ENCODE measurements at regions of chr2 and their contacts with region 1.

Region 1: GRCh38 chr2:133561045-133561852 is 7.0 kb downstream of the NCKAP5 start:
- DNase-seq: peak; percentile 90
- ATAC-seq: peak; percentile 91
- H3K4me3 ChIP-seq: no peak overlapping the region
- H3K27ac ChIP-seq: no peak overlapping the region; the same call in 1 of the 2 replicates
- H3K4me1 ChIP-seq: peaks cover 15% of the 10 kb centered on the region
- H3K27me3 ChIP-seq: no peaks in the 10 kb centered on the region
- CTCF ChIP-seq: peak; percentile 81
- POLR2A ChIP-seq: no peak
- RAD21 ChIP-seq: peak; percentile 89

Region 2: GRCh38 chr2:132651115-132652045 is 909.9 kb before region 1 on chr2:
- CTCF ChIA-PET with region 1: no interaction called
- POLR2A ChIA-PET with region 1: no interaction called
- dilution Hi-C with region 1: no loop called
- in situ Hi-C with region 1: loop called (anchors 25 kb)
- intact Hi-C with region 1: no loop called
- DNase-seq: peak; percentile 71
- ATAC-seq: peak; percentile 91
- H3K4me3 ChIP-seq: no peak overlapping the region
- H3K27ac ChIP-seq: peak overlapping the region; percentile 4
- H3K4me1 ChIP-seq: peaks cover 13% of the 10 kb centered on the region
- H3K27me3 ChIP-seq: no peaks in the 10 kb centered on the region
- CTCF ChIP-seq: peak; percentile 71
- POLR2A ChIP-seq: no peak
- RAD21 ChIP-seq: peak; percentile 74

Region 3: GRCh38 chr2:133171393-133172004 is 389.8 kb before region 1 on chr2:
- CTCF ChIA-PET with region 1: interaction called, 4 read pairs
- POLR2A ChIA-PET with region 1: interaction called, 3 read pairs
- dilution Hi-C with region 1: no loop called
- in situ Hi-C with region 1: loop called (anchors 10 kb)
- intact Hi-C with region 1: loop called (anchors 1 kb)
- DNase-seq: peak; percentile 74
- ATAC-seq: peak; percentile 64
- H3K4me3 ChIP-seq: no peak overlapping the region
- H3K27ac ChIP-seq: no peak overlapping the region
- H3K4me1 ChIP-seq: peaks cover 11% of the 10 kb centered on the region
- H3K27me3 ChIP-seq: no peaks in the 10 kb centered on the region
- CTCF ChIP-seq: peak; percentile 80
- POLR2A ChIP-seq: no peak
- RAD21 ChIP-seq: peak; percentile 87

Region 4: DNA sequence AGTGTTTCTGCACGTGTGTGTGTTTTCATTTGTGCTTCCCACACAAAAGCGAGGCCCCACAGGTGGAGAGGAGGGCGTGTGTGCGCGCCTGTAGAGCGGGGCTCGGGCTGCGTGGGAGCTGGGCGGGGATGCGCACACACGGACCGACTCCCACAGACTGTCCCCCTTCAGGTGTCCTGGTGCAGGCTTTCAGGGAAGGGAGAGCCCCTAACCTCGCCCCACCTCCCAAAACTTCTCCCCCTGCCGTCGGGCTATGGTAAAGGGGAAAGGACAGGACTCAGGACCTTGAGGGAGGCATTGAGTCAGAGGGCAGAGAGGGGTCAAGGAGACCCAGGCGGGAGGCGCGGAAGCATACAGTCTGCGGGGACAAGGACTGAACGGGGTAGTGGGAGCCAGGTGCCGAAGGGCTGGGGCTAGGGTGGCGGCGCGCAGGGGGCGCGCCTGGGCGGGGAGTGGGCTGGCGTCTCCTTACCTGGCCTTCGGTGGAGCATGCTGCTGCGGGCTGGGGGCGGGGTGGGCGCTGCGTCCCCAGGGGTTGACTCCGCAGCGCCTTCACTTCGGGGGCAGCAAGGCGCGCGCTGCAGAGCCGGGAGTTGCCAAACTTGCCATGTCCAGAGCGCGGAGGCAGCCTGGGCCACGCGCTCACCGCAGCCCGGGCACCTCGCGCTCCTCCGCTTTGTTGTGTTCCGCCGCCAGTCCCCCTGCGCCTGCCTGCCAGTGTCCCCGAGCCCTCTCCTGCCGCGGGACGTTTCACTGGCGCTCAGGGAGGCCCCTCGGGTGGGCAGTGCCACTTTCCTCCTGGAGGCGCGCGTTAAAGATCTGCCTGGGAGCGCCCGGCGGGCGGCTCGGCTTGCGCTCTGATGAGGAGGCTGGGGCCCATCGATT is 295.0 kb before region 1 on chr2:
- CTCF ChIA-PET with region 1: interaction called, 9 read pairs
- POLR2A ChIA-PET with region 1: interaction called, 6 read pairs
- dilution Hi-C with region 1: no loop called
- in situ Hi-C with region 1: no loop called
- intact Hi-C with region 1: loop called (anchors 1 kb)
- DNase-seq: no peak
- ATAC-seq: peak; percentile 38
- H3K4me3 ChIP-seq: peak overlapping the region; percentile 63
- H3K27ac ChIP-seq: peak overlapping the region; percentile 96
- H3K4me1 ChIP-seq: peaks cover 25% of the 10 kb centered on the region
- H3K27me3 ChIP-seq: no peaks in the 10 kb centered on the region
- CTCF ChIP-seq: 0 out of 2 replicates have a peak, but pooled peaks have one; percentile 13
- POLR2A ChIP-seq: no peak
- RAD21 ChIP-seq: no peak

Region 5: GRCh38 chr2:133780099-133780839 is 219.0 kb after region 1 on chr2:
- CTCF ChIA-PET with region 1: interaction called, 5 read pairs
- POLR2A ChIA-PET with region 1: no interaction called
- dilution Hi-C with region 1: no loop called
- in situ Hi-C with region 1: loop called (anchors 5 kb)
- intact Hi-C with region 1: loop called (anchors 2 kb)
- DNase-seq: peak; percentile 86
- ATAC-seq: peak; percentile 94
- H3K4me3 ChIP-seq: no peak overlapping the region
- H3K27ac ChIP-seq: no peak overlapping the region
- H3K4me1 ChIP-seq: 0 out of 2 replicates have a peak, but pooled peaks cover 2% of the 10 kb centered on the region
- H3K27me3 ChIP-seq: no peaks in the 10 kb centered on the region
- CTCF ChIP-seq: peak; percentile 84
- POLR2A ChIP-seq: no peak
- RAD21 ChIP-seq: peak; percentile 86